Thyroid gland (tissue), 4 donors: ENCODE measurements at regions of chr2 and their contacts with region 1.

Region 1: GRCh38 chr2:6922201-6922685 is 5.0 kb downstream of the RNF144A start:
- DNase-seq: peak; percentile 67 to 71
- H3K4me3 ChIP-seq: no peak overlapping the region
- H3K27ac ChIP-seq: no peak overlapping the region
- H3K4me1 ChIP-seq: peaks cover 11 to 22% of the 10 kb centered on the region in 2 donors
- H3K27me3 ChIP-seq: no peaks in the 10 kb centered on the region
- CTCF ChIP-seq: peak in 3 of 6 experiments; percentile 11 to 56 (median 47)
- POLR2A ChIP-seq: no peak

Region 2: GRCh38 chr2:6973895-6974545 is 51.8 kb after region 1 on chr2:
- intact Hi-C with region 1: loop called (anchors 5 kb)
- DNase-seq: no peak
- H3K4me3 ChIP-seq: no peak overlapping the region
- H3K27ac ChIP-seq: no peak overlapping the region
- H3K4me1 ChIP-seq: no peaks in the 10 kb centered on the region
- H3K27me3 ChIP-seq: no peaks in the 10 kb centered on the region
- CTCF ChIP-seq: no peak
- POLR2A ChIP-seq: no peak

Region 3: DNA sequence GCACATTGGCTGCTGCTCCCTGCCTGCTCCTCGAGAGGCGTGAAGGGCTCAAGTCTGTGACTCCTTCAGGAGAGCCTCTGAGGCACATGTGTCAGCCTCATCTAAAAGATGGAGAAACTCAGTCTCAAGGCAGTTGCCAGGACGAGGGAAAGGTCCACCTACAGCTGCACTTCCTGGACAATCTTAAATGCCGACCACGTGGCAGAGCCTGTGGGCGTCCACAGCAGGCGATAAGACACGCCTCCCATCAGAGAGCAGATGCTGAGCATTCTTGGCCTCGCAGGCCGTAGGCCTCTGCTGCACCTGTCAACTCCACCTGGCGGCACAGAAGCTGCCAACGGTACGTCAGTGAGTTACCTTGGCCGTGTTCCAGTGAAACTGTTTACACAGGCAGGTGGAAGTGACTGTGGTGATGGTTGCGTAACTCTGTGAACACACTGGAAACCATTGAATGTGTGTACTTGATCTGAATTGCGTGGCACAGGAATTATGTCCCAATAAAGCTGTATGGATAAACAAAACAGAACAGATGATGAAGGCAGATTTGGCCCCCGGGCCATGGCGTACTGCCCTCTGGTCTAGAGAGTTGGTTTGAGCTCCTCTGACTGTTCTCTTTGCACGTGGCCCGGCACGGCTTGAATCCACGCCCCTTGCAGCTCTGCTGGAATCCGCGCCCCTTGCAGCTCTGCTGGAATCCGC is 109.5 kb after region 1 on chr2:
- intact Hi-C with region 1: loop called (anchors 5 kb)
- DNase-seq: peak; percentile 97
- H3K4me3 ChIP-seq: no peak overlapping the region
- H3K27ac ChIP-seq: peak overlapping the region in 1 of 3 donors; percentile 12
- H3K4me1 ChIP-seq: peaks cover 37 to 49% of the 10 kb centered on the region in 2 donors
- H3K27me3 ChIP-seq: no peaks in the 10 kb centered on the region
- CTCF ChIP-seq: peak in 4 of 6 experiments; percentile 11 to 46 (median 31)
- POLR2A ChIP-seq: no peak